Activated CD8-positive, alpha-beta T cell treated with anti-CD3 and anti-CD28 coated beads for 36 hours (primary cell): ENCODE measurements at regions of chr15 and their contacts with region 1.

Region 1: GRCh38 chr15:73273181-73274002 is 95.4 kb downstream of the HCN4 start:
- DNase-seq: peak; percentile 66
- ATAC-seq: peak; percentile 85
- H3K4me3 Mint-ChIP-seq: no peak overlapping the region
- H3K27ac Mint-ChIP-seq: no peak overlapping the region
- H3K4me1 Mint-ChIP-seq: peaks cover 2% of the 10 kb centered on the region
- H3K27me3 Mint-ChIP-seq: no peaks in the 10 kb centered on the region
- CTCF ChIP-seq: peak; percentile 74

Region 2: GRCh38 chr15:73240866-73241499 is 32.4 kb before region 1 on chr15:
- CTCF ChIA-PET with region 1: interaction called, 76 read pairs
- POLR2A ChIA-PET with region 1: no interaction called
- intact Hi-C with region 1: no loop called
- DNase-seq: peak; percentile 87
- ATAC-seq: no peak
- H3K4me3 Mint-ChIP-seq: no peak overlapping the region
- H3K27ac Mint-ChIP-seq: no peak overlapping the region
- H3K4me1 Mint-ChIP-seq: no peaks in the 10 kb centered on the region
- H3K27me3 Mint-ChIP-seq: no peaks in the 10 kb centered on the region
- CTCF ChIP-seq: peak; percentile 85

Region 3: DNA sequence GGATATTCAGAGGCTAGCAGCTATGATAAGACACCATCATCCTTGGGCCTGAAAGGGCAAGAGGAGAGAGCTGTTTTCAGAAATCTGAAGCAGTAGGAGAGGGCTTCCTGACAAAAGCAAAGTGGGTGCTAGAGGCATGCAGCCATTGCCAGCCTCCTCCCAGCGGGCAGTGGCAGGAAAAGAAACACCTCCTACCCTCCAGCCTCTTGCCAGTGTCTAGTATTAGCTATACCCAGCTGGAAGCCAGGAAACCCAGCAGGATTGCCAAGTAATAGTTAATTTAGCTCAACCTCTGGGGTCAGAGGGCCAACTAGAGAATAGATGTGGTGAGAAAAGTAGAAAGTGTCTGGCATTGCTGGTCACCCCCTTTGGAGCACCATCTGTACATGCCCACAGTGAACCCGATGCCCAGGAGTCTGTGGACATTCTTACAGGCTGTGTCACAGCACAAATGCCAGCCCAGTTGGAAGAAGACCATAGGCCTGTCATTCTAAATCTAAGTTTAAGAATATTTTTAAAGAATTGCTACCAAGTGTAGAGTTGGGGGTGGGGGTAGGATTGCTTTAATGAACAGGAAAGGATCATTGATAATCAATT is 10.1 kb after region 1 on chr15:
- CTCF ChIA-PET with region 1: interaction called, 11 read pairs
- POLR2A ChIA-PET with region 1: interaction called, 4 read pairs
- intact Hi-C with region 1: no loop called
- DNase-seq: no peak
- ATAC-seq: no peak
- H3K4me3 Mint-ChIP-seq: no peak overlapping the region
- H3K27ac Mint-ChIP-seq: no peak overlapping the region
- H3K4me1 Mint-ChIP-seq: peaks cover 10% of the 10 kb centered on the region
- H3K27me3 Mint-ChIP-seq: peaks cover 2% of the 10 kb centered on the region
- CTCF ChIP-seq: no peak

Region 4: DNA sequence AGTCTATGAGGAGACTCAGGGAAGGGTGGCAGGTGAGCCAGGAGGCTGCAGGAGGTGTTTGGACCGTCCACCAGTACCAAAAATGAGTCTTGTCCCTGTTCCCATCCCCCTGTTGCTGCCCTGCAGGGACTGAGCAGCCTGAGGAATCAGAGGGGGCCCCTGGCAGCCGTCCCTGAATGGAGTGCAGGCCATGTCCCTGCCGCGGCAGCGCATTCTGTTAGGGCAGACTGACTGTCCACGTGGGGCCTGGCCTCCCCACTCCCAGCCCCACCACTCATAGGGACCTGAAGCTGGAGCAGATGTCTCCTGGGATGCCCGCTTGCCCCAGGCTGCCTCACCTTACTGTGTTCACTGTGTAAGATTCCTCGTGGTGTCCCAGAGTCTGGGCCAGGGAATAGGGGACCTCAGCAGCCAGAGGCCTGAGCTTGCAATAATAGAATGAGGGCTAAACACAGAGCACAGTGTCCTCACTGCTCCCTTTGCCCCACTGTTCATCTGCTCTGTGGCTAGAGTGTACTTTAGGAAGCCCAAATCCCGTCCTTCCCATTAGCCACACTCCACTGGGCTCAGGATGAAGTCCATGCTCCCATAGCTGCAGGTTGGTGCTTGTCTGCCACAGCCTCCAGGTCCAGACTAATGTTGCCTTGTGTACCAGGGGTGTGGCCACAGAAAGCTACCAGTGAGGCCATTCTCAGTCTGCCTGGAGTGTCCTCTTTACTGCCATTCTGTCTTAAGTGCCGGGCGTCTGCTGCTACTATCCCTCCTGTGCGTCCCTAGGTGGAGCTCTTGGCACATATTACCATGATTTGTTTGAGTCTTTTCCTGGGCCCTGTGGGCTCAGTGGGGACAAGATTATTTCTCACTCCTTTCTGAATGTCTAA is 32.2 kb after region 1 on chr15:
- CTCF ChIA-PET with region 1: no interaction called
- POLR2A ChIA-PET with region 1: no interaction called
- intact Hi-C with region 1: no loop called
- DNase-seq: peak; percentile 55
- ATAC-seq: no peak
- H3K4me3 Mint-ChIP-seq: no peak overlapping the region
- H3K27ac Mint-ChIP-seq: no peak overlapping the region
- H3K4me1 Mint-ChIP-seq: peaks cover 8% of the 10 kb centered on the region
- H3K27me3 Mint-ChIP-seq: peaks cover 3% of the 10 kb centered on the region
- CTCF ChIP-seq: peak; percentile 49

Region 5: DNA sequence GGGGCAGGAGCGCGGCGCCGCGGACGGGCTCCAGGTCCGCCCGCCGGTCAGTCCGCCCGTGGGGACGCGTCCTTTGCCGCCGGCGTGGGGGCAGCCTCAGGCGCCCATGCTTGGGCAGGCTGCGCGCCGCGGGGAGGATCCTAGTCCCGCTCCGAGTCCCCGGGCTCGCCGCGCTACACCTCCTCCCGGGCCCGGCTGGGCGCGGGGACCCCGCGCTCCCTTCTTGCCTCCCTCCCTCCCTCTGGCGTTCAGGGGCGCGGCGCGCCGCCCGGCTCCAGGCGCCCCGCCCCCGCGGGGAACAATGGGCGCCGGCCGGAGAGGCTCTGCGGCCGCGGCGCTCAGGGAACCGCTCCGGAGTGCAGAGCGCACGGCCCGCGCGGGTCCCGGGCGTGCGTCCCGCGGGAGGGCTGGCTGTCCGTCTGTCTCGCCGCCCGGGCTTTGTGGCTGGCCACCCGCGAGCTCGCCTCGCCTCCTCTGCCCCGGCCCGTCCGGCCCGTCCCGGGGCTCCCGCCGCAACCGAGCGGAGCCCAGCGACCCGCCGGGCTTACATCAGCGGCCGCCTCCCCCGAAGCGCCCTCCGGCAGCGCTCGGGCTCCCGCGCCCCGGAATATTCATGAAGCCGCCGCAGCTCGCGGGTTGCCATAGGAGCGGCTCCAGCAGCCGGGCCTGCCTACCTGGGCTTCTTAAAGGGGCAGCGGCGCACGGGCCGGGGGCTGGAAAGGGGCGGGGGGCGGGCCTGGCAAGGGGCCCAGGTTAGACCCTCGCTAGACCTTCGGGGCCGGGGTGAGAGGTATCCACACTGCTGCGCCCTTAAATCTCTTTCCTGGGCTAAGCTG is 95.1 kb after region 1 on chr15 and contains the start of gene HCN4:
- CTCF ChIA-PET with region 1: no interaction called
- POLR2A ChIA-PET with region 1: no interaction called
- intact Hi-C with region 1: no loop called
- DNase-seq: no peak
- ATAC-seq: no peak
- H3K4me3 Mint-ChIP-seq: no peak within 1 kb of the TSS
- H3K27ac Mint-ChIP-seq: no peak within 1 kb of the TSS
- H3K4me1 Mint-ChIP-seq: no peaks in the 10 kb centered on the region
- H3K27me3 Mint-ChIP-seq: peaks cover 45% of the 10 kb centered on the region
- CTCF ChIP-seq: no peak
- total RNA-seq, gene HCN4: not detected